ENCODE measurements at regions of chr4 and their contacts with region 1.

Region 1: DNA sequence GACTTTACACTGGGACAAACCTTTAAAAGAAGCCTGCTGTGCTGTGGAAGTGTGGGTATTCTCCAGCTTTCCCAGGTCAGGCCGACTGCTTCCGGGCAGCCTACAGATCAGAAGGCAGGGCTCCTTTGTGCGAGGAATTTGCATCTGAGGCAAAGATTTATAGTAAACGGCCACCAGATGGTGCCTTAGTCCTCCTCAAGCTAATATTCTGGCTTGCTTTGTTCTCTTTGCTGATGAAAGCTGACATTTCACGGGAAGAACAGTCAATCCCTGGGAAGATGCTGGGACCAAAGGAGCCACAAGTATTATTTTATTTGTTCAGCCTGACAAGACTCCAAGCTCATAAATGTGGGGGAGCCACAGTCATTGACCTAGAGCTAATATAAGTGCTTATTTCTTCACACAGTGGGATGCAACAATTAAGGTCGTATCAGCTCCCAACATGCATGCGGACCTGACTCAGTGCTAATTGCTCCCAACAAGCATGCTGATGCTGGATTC is 120.7 kb upstream of the TRIM2 start:
- DNase-seq: peak; percentile 75
- H3K4me3 ChIP-seq: no peak overlapping the region
- H3K27ac ChIP-seq: no peak overlapping the region
- H3K4me1 ChIP-seq: no peaks in the 10 kb centered on the region
- H3K27me3 ChIP-seq: peaks cover 4 to 7% of the 10 kb centered on the region in 2 experiments
- CTCF ChIP-seq: peak; percentile 59 to 66
- POLR2A ChIP-seq: no peak

Region 2: GRCh38 chr4:152850377-152850776 is 233.1 kb before region 1 on chr4:
- CTCF ChIA-PET with region 1: interaction called, 42 read pairs
- POLR2A ChIA-PET with region 1: no interaction called
- dilution Hi-C with region 1: no loop called
- intact Hi-C with region 1: loop called (anchors 1 kb)
- DNase-seq: no peak
- H3K4me3 ChIP-seq: no peak overlapping the region
- H3K27ac ChIP-seq: no peak overlapping the region
- H3K4me1 ChIP-seq: peaks cover 7% of the 10 kb centered on the region
- H3K27me3 ChIP-seq: no peaks in the 10 kb centered on the region
- CTCF ChIP-seq: no peak
- POLR2A ChIP-seq: no peak

Region 3: GRCh38 chr4:152937336-152938236 is 145.9 kb before region 1 on chr4:
- CTCF ChIA-PET with region 1: interaction called, 3 read pairs
- POLR2A ChIA-PET with region 1: no interaction called
- dilution Hi-C with region 1: no loop called
- intact Hi-C with region 1: loop called (anchors 10 kb)
- DNase-seq: peak; percentile 26
- H3K4me3 ChIP-seq: peak overlapping the region; percentile 49 to 57 (median 51)
- H3K27ac ChIP-seq: no peak overlapping the region
- H3K4me1 ChIP-seq: peaks cover 17% of the 10 kb centered on the region
- H3K27me3 ChIP-seq: peaks cover 52 to 74% of the 10 kb centered on the region in 2 experiments
- CTCF ChIP-seq: no peak
- POLR2A ChIP-seq: no peak

Region 4: DNA sequence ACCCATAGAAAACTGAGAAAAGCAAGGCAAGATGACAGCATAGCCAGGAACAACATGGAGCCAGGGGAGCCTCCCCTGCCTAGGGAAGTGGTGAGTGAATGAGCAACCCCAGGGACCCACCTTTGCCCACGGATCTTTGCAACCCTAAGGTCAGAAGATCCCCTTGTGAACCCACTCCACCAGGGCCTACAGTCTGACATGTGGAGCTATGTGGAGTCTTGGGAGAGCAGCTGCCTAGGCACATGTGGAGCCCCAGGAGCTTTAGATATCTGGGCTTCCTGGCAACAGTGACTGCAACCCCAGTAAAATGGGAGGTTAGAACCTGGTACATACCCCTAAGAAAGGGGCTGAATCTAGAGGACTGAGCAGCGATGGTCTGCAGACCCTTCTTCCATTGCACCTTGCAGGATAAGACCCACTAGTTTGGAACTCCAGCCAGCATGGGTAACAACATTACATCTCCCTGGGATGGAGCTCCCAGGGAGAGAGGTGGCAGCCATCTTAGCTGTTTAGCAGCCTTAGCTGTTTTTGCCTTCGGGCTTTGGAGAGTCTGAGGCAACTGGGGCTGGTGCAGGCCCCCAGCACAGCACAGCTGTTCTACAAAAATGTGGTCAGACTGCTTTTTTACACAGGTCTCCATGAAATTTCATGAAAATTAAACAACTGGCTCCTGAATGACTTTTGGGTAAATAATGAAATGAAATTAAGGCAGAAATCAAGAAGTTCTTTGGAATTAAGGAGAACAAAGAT is 16.1 kb after region 1 on chr4:
- CTCF ChIA-PET with region 1: interaction called, 15 read pairs
- POLR2A ChIA-PET with region 1: no interaction called
- dilution Hi-C with region 1: no loop called
- intact Hi-C with region 1: no loop called
- DNase-seq: no peak
- H3K4me3 ChIP-seq: no peak overlapping the region
- H3K27ac ChIP-seq: no peak overlapping the region
- H3K4me1 ChIP-seq: no peaks in the 10 kb centered on the region
- H3K27me3 ChIP-seq: peaks cover 0 to 4% of the 10 kb centered on the region in 2 experiments
- CTCF ChIP-seq: no peak
- POLR2A ChIP-seq: no peak

Region 5: GRCh38 chr4:153198719-153199118 is 115.2 kb after region 1 on chr4:
- CTCF ChIA-PET with region 1: no interaction called
- POLR2A ChIA-PET with region 1: no interaction called
- dilution Hi-C with region 1: no loop called
- intact Hi-C with region 1: no loop called
- DNase-seq: no peak
- H3K4me3 ChIP-seq: no peak overlapping the region
- H3K27ac ChIP-seq: no peak overlapping the region
- H3K4me1 ChIP-seq: no peaks in the 10 kb centered on the region
- H3K27me3 ChIP-seq: peaks cover 2% of the 10 kb centered on the region in 2 experiments
- CTCF ChIP-seq: no peak
- POLR2A ChIP-seq: no peak

Region 6: GRCh38 chr4:153318696-153319320 is 235.3 kb after region 1 on chr4:
- CTCF ChIA-PET with region 1: interaction called, 3 read pairs
- POLR2A ChIA-PET with region 1: no interaction called
- dilution Hi-C with region 1: no loop called
- intact Hi-C with region 1: loop called (anchors 2 kb)
- DNase-seq: peak; percentile 62
- H3K4me3 ChIP-seq: no peak overlapping the region
- H3K27ac ChIP-seq: no peak overlapping the region
- H3K4me1 ChIP-seq: no peaks in the 10 kb centered on the region
- H3K27me3 ChIP-seq: no peaks in the 10 kb centered on the region
- CTCF ChIP-seq: peak; percentile 55 to 62
- POLR2A ChIP-seq: no peak

Measured in endothelial cell of umbilical vein (primary cell).